Transverse colon (tissue), 4 donors: ENCODE measurements at regions of chr1 and their contacts with region 1.

Region 1: GRCh38 chr1:211705467-211706091 is 30.2 kb upstream of the NEK2 start:
- DNase-seq: no peak
- H3K4me3 ChIP-seq: no peak overlapping the region
- H3K27ac ChIP-seq: no peak overlapping the region
- H3K4me1 ChIP-seq: no peaks in the 10 kb centered on the region
- H3K27me3 ChIP-seq: no peaks in the 10 kb centered on the region
- CTCF ChIP-seq: no peak
- EP300 ChIP-seq: no peak
- POLR2A ChIP-seq: no peak

Region 2: DNA sequence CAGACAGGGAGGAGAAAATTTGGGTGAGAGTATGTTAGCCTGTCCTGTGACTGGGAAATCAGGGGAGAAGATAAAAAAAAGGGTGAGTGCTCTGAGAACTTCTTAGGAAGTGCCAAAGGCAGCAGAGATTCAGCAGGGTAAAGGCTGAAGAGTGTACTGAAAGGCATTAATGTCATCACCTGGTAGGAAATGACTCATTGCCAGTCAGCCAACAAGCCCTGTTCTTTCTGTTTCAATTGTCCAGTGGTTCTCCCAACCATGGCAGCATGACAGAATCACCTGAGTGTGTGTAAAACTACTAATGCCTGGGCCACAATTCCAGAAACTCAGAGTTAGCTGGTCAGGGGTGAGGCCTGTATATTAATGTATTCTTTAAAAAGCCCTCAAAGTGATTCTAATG is 246.3 kb after region 1 on chr1:
- in situ Hi-C with region 1: loop called in 1 of 4 experiments (anchors 25 kb)
- intact Hi-C with region 1: no loop called
- DNase-seq: no peak
- H3K4me3 ChIP-seq: no peak overlapping the region
- H3K27ac ChIP-seq: no peak overlapping the region
- H3K4me1 ChIP-seq: peaks cover 0 to 8% (median 4%) of the 10 kb centered on the region in 4 donors
- H3K27me3 ChIP-seq: no peaks in the 10 kb centered on the region
- CTCF ChIP-seq: no peak
- EP300 ChIP-seq: no peak
- POLR2A ChIP-seq: no peak